ENCODE measurements at regions of chr11 and their contacts with region 1.

Region 1: GRCh38 chr11:64767344-64768299 is 7.8 kb upstream of the PYGM start:
- DNase-seq: peak; percentile 82
- ATAC-seq: no peak
- H3K4me3 ChIP-seq: no peak overlapping the region
- H3K4me3 Mint-ChIP-seq: peak overlapping the region; percentile 66
- H3K27ac ChIP-seq: peak overlapping the region; percentile 64 to 75
- H3K27ac Mint-ChIP-seq: peak overlapping the region; percentile 92
- H3K4me1 ChIP-seq: peaks cover 85 to 96% of the 10 kb centered on the region in 2 donors
- H3K4me1 Mint-ChIP-seq: peaks cover 91% of the 10 kb centered on the region
- H3K27me3 ChIP-seq: no peaks in the 10 kb centered on the region
- H3K27me3 Mint-ChIP-seq: no peaks in the 10 kb centered on the region
- CTCF ChIP-seq: peak; percentile 90

Region 2: GRCh38 chr11:63970902-63971301 is 796.7 kb before region 1 on chr11:
- CTCF ChIA-PET with region 1: no interaction called
- POLR2A ChIA-PET with region 1: no interaction called
- intact Hi-C with region 1: no loop called
- DNase-seq: no peak
- ATAC-seq: no peak
- H3K4me3 ChIP-seq: no peak overlapping the region
- H3K4me3 Mint-ChIP-seq: no peak overlapping the region
- H3K27ac ChIP-seq: no peak overlapping the region
- H3K27ac Mint-ChIP-seq: no peak overlapping the region
- H3K4me1 ChIP-seq: peaks cover 5 to 16% of the 10 kb centered on the region in 2 donors
- H3K4me1 Mint-ChIP-seq: peaks cover 19% of the 10 kb centered on the region
- H3K27me3 ChIP-seq: no peaks in the 10 kb centered on the region
- H3K27me3 Mint-ChIP-seq: peaks cover 8% of the 10 kb centered on the region
- CTCF ChIP-seq: no peak

Region 3: GRCh38 chr11:64747961-64748665 is 19.5 kb before region 1 on chr11:
- CTCF ChIA-PET with region 1: interaction called, 280 read pairs
- POLR2A ChIA-PET with region 1: interaction called, 175 read pairs
- intact Hi-C with region 1: loop called (anchors 1 kb)
- DNase-seq: no peak
- ATAC-seq: no peak
- H3K4me3 ChIP-seq: no peak overlapping the region
- H3K4me3 Mint-ChIP-seq: peak overlapping the region; percentile 27
- H3K27ac ChIP-seq: no peak overlapping the region
- H3K27ac Mint-ChIP-seq: peak overlapping the region; percentile 90
- H3K4me1 ChIP-seq: peaks cover 15 to 31% of the 10 kb centered on the region in 2 donors
- H3K4me1 Mint-ChIP-seq: peaks cover 59% of the 10 kb centered on the region
- H3K27me3 ChIP-seq: no peaks in the 10 kb centered on the region
- H3K27me3 Mint-ChIP-seq: no peaks in the 10 kb centered on the region
- CTCF ChIP-seq: no peak